Heart right ventricle (tissue), 16 donors: ENCODE measurements at regions of chrX and their contacts with region 1.

Region 1: DNA sequence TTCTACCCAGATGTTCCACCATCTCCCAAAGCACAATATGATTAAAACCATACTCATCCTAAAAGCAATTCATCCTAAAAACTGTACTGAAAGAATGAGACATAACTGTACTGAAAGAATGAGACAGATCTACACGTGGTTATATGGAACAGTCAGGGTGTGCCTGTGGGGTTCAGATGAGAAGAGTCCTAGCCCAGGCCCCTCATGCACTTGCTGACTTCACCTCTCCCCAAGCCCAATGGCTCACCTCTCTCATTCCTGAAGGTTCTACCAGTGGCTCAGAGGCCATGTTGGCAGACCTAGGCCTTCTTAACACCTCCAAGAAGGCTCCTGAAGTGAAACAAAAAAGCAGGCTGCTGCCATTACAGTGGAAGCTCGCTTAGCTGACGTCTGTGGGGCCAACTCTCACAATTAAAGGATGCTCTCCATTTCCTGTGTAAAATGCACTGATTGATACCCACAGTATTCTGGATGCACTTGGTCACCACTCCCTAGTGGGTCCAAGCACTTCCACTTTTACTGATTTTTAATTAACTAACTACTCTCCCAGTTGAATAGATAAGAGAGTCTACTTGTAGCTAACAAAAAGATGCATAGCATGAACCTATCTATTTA is 3.8 kb downstream of the PLAC1 start:
- DNase-seq: no peak
- ATAC-seq: no peak
- H3K4me3 ChIP-seq: no peak overlapping the region
- H3K27ac ChIP-seq: no peak overlapping the region
- H3K4me1 ChIP-seq: no peaks in the 10 kb centered on the region
- H3K27me3 ChIP-seq: peaks cover 0 to 2% (median 0%) of the 10 kb centered on the region in 7 donors
- CTCF ChIP-seq: no peak

Region 2: GRCh38 chrX:134599184-134599914 is 55.2 kb before region 1 on chrX:
- intact Hi-C with region 1: no loop called
- DNase-seq: peak in 1 of 2 donors; percentile 5
- ATAC-seq: peak in 4 of 8 donors; percentile 53 to 63 (median 56)
- H3K4me3 ChIP-seq: no peak overlapping the region
- H3K27ac ChIP-seq: no peak overlapping the region
- H3K4me1 ChIP-seq: peaks cover 0 to 9% (median 0%) of the 10 kb centered on the region in 9 donors
- H3K27me3 ChIP-seq: peaks cover 0 to 43% (median 0%) of the 10 kb centered on the region in 7 donors
- CTCF ChIP-seq: no peak

Region 3: GRCh38 chrX:134718105-134718965 is 63.8 kb after region 1 on chrX:
- intact Hi-C with region 1: loop called in 1 of 10 experiments (anchors 5 kb)
- DNase-seq: peak; percentile 14 to 15
- ATAC-seq: peak; percentile 62 to 85 (median 73)
- H3K4me3 ChIP-seq: no peak overlapping the region
- H3K27ac ChIP-seq: peak overlapping the region in 2 of 10 donors; percentile 40 to 44
- H3K4me1 ChIP-seq: peaks cover 0 to 9% (median 0%) of the 10 kb centered on the region in 9 donors
- H3K27me3 ChIP-seq: peaks cover 0 to 18% (median 0%) of the 10 kb centered on the region in 7 donors
- CTCF ChIP-seq: peak in 2 of 9 donors; percentile 7 to 39